GM13977 (cell line): ENCODE measurements at regions of chr3 and their contacts with region 1.

Region 1: GRCh38 chr3:45199837-45200648 is 26.0 kb downstream of the TMEM158 start:
- DNase-seq: no peak
- CTCF ChIP-seq: no peak

Region 2: GRCh38 chr3:45043728-45044299 is 156.2 kb before region 1 on chr3:
- in situ Hi-C with region 1: loop called (anchors 10 kb)
- DNase-seq: no peak
- CTCF ChIP-seq: no peak